GM12878 (cell line): ENCODE measurements at regions of chr17 and their contacts with region 1.

Region 1: GRCh38 chr17:50297407-50297865 is 23.2 kb downstream of the TMEM92 start:
- DNase-seq: no peak
- ATAC-seq: peak; percentile 99
- H3K4me3 ChIP-seq: no peak overlapping the region
- H3K27ac ChIP-seq: no peak overlapping the region
- H3K4me1 ChIP-seq: no peaks in the 10 kb centered on the region
- H3K27me3 ChIP-seq: no peaks in the 10 kb centered on the region
- CTCF ChIP-seq: peak; percentile 94 to 98 (median 97); a peak in 5 of 6 replicates
- EP300 ChIP-seq: no peak
- POLR2A ChIP-seq: no peak
- RAD21 ChIP-seq: peak; percentile 100

Region 2: DNA sequence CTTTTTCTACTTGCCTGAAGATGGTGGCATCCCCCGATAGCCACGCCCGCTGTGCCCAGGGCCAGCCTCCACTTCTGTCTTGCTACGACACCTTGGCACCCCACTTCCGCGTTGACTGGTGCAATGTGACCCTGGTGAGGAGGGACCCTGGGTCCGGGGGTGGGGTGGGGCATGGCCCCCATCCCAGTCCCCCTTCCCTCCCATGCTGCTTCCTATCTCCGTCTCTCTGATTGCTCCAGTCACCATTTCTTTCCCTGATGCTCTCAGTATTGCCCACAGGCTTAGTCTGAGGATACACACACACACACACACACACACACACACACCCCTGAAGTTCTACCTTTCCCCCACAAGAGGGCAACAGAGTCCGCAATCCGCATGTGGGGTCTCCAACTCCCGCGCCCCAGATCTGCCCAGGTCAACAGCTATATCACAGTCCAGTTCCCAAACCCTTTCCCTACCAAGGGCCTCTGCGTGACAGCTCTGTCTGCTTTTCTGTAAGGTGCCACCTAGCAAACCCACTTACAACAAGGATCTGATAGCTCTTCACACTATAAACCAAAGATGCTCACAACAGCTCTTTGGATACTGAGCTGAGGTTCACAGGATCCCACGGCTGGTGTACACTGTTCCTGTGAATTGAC is 128.2 kb before region 1 on chr17:
- CTCF ChIA-PET with region 1: interaction called, 108 read pairs
- POLR2A ChIA-PET with region 1: interaction called, 3 read pairs
- RAD21 ChIA-PET with region 1: interaction called, 38 read pairs
- SMC1A ChIA-PET with region 1: interaction called, 31 read pairs
- in situ Hi-C with region 1: no loop called
- intact Hi-C with region 1: loop called (anchors 1 kb)
- DNase-seq: peak; percentile 44
- ATAC-seq: peak; percentile 73
- H3K4me3 ChIP-seq: no peak overlapping the region
- H3K27ac ChIP-seq: no peak overlapping the region
- H3K4me1 ChIP-seq: peaks cover 18% of the 10 kb centered on the region
- H3K27me3 ChIP-seq: no peaks in the 10 kb centered on the region
- CTCF ChIP-seq: peak; percentile 88 to 95 (median 90)
- EP300 ChIP-seq: no peak
- POLR2A ChIP-seq: no peak
- RAD21 ChIP-seq: peak; percentile 96

Region 3: GRCh38 chr17:50194934-50195865 is 102.2 kb before region 1 on chr17:
- CTCF ChIA-PET with region 1: interaction called, 294 read pairs
- POLR2A ChIA-PET with region 1: interaction called, 5 read pairs
- RAD21 ChIA-PET with region 1: interaction called, 106 read pairs
- SMC1A ChIA-PET with region 1: interaction called, 102 read pairs
- in situ Hi-C with region 1: loop called (anchors 10 kb)
- intact Hi-C with region 1: loop called (anchors 1 kb)
- DNase-seq: no peak
- ATAC-seq: no peak
- H3K4me3 ChIP-seq: no peak overlapping the region
- H3K27ac ChIP-seq: no peak overlapping the region
- H3K4me1 ChIP-seq: peaks cover 23% of the 10 kb centered on the region
- H3K27me3 ChIP-seq: no peaks in the 10 kb centered on the region
- CTCF ChIP-seq: 0 out of 6 replicates have a peak, but pooled peaks of 1 of the 3 experiments have one; percentile 5
- EP300 ChIP-seq: no peak
- POLR2A ChIP-seq: no peak
- RAD21 ChIP-seq: no peak

Region 4: GRCh38 chr17:50248255-50248654 is 49.2 kb before region 1 on chr17:
- CTCF ChIA-PET with region 1: no interaction called
- POLR2A ChIA-PET with region 1: no interaction called
- RAD21 ChIA-PET with region 1: no interaction called
- SMC1A ChIA-PET with region 1: no interaction called
- in situ Hi-C with region 1: no loop called
- intact Hi-C with region 1: no loop called
- DNase-seq: no peak
- ATAC-seq: no peak
- H3K4me3 ChIP-seq: no peak overlapping the region
- H3K27ac ChIP-seq: no peak overlapping the region
- H3K4me1 ChIP-seq: no peaks in the 10 kb centered on the region
- H3K27me3 ChIP-seq: no peaks in the 10 kb centered on the region
- CTCF ChIP-seq: no peak
- EP300 ChIP-seq: no peak
- POLR2A ChIP-seq: no peak
- RAD21 ChIP-seq: no peak

Region 5: GRCh38 chr17:50269477-50270434 is 27.7 kb before region 1 on chr17:
- CTCF ChIA-PET with region 1: interaction called, 298 read pairs
- POLR2A ChIA-PET with region 1: no interaction called
- RAD21 ChIA-PET with region 1: interaction called, 17 read pairs
- SMC1A ChIA-PET with region 1: interaction called, 87 read pairs
- in situ Hi-C with region 1: no loop called
- intact Hi-C with region 1: loop called (anchors 2 kb)
- DNase-seq: peak; percentile 19
- ATAC-seq: peak; percentile 86
- H3K4me3 ChIP-seq: no peak overlapping the region
- H3K27ac ChIP-seq: no peak overlapping the region
- H3K4me1 ChIP-seq: no peaks in the 10 kb centered on the region; the same call in 1 of the 2 replicates
- H3K27me3 ChIP-seq: no peaks in the 10 kb centered on the region
- CTCF ChIP-seq: peak; percentile 77 to 87 (median 85)
- EP300 ChIP-seq: no peak
- POLR2A ChIP-seq: no peak
- RAD21 ChIP-seq: peak; percentile 65

Region 6: DNA sequence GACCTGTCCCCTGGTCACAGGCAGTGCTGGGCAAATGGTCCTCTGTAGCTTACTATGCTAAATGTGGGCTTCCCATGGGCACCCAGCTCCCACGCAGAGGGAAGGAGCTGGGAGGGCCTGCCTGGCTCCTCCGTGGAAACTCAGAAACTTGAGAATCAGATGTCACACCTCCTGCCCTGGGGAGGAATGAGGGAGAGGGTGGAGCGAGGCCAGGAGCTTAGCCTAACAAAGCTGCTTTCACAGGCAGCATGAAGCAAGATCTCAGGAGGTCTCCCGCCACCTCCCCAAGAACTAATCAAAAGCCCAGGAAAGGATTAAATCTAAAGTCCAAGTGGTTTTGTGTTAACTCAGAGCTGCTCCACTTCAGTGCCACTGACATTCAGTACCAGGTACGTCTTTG is 14.9 kb after region 1 on chr17:
- CTCF ChIA-PET with region 1: interaction called, 44 read pairs
- POLR2A ChIA-PET with region 1: interaction called, 9 read pairs
- RAD21 ChIA-PET with region 1: interaction called, 19 read pairs
- SMC1A ChIA-PET with region 1: interaction called, 15 read pairs
- in situ Hi-C with region 1: no loop called
- intact Hi-C with region 1: no loop called
- DNase-seq: no peak
- ATAC-seq: no peak
- H3K4me3 ChIP-seq: no peak overlapping the region
- H3K27ac ChIP-seq: no peak overlapping the region
- H3K4me1 ChIP-seq: peaks cover 17% of the 10 kb centered on the region
- H3K27me3 ChIP-seq: no peaks in the 10 kb centered on the region
- CTCF ChIP-seq: no peak
- EP300 ChIP-seq: no peak
- POLR2A ChIP-seq: no peak
- RAD21 ChIP-seq: no peak

Region 7: GRCh38 chr17:50325906-50326305 is 28.5 kb after region 1 on chr17:
- CTCF ChIA-PET with region 1: interaction called, 11 read pairs
- POLR2A ChIA-PET with region 1: no interaction called
- RAD21 ChIA-PET with region 1: interaction called, 3 read pairs
- SMC1A ChIA-PET with region 1: interaction called, 12 read pairs
- in situ Hi-C with region 1: no loop called
- intact Hi-C with region 1: no loop called
- DNase-seq: no peak
- ATAC-seq: no peak
- H3K4me3 ChIP-seq: no peak overlapping the region
- H3K27ac ChIP-seq: no peak overlapping the region
- H3K4me1 ChIP-seq: peaks cover 3% of the 10 kb centered on the region
- H3K27me3 ChIP-seq: no peaks in the 10 kb centered on the region
- CTCF ChIP-seq: no peak
- EP300 ChIP-seq: no peak
- POLR2A ChIP-seq: no peak
- RAD21 ChIP-seq: no peak

Region 8: DNA sequence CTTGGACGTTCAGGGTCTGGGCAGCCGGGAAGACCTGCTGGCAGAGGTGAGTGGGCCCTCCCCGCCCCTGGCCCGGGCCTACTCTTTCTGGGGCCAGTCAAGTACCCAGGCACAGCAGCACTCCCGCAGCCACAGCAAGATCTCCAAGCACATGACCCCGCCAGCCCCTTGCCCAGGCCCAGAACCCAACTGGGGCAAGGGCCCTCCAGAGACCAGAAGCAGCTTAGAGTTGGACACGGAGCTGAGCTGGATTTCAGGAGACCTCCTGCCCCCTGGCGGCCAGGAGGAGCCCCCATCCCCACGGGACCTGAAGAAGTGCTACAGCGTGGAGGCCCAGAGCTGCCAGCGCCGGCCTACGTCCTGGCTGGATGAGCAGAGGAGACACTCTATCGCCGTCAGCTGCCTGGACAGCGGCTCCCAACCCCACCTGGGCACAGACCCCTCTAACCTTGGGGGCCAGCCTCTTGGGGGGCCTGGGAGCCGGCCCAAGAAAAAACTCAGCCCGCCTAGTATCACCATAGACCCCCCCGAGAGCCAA is 328.7 kb after region 1 on chr17:
- CTCF ChIA-PET with region 1: no interaction called
- POLR2A ChIA-PET with region 1: no interaction called
- RAD21 ChIA-PET with region 1: no interaction called
- SMC1A ChIA-PET with region 1: no interaction called
- in situ Hi-C with region 1: no loop called
- intact Hi-C with region 1: no loop called
- DNase-seq: no peak
- ATAC-seq: peak; percentile 90
- H3K4me3 ChIP-seq: no peak overlapping the region
- H3K27ac ChIP-seq: no peak overlapping the region
- H3K4me1 ChIP-seq: no peaks in the 10 kb centered on the region
- H3K27me3 ChIP-seq: peaks cover 0 to 1% of the 10 kb centered on the region in 2 experiments; a peak in 2 of 4 replicates
- CTCF ChIP-seq: peak; percentile 57 to 83 (median 73)
- EP300 ChIP-seq: no peak
- POLR2A ChIP-seq: no peak
- RAD21 ChIP-seq: peak; percentile 73